Mammary epithelial cell (primary cell): ENCODE measurements at regions of chr17 and their contacts with region 1.

Region 1: GRCh38 chr17:49239963-49240362 is 9.4 kb upstream of the PHOSPHO1 start:
- DNase-seq: no peak
- H3K4me3 ChIP-seq: no peak overlapping the region
- H3K27ac ChIP-seq: no peak overlapping the region
- H3K4me1 ChIP-seq: no peaks in the 10 kb centered on the region
- H3K27me3 ChIP-seq: no peaks in the 10 kb centered on the region
- CTCF ChIP-seq: no peak

Region 2: GRCh38 chr17:49197346-49197998 is 42.5 kb before region 1 on chr17:
- CTCF ChIA-PET with region 1: no interaction called
- dilution Hi-C with region 1: loop called (anchors 5 kb)
- in situ Hi-C with region 1: no loop called
- intact Hi-C with region 1: no loop called
- DNase-seq: peak; percentile 8
- H3K4me3 ChIP-seq: no peak overlapping the region
- H3K27ac ChIP-seq: no peak overlapping the region
- H3K4me1 ChIP-seq: peaks cover 4% of the 10 kb centered on the region
- H3K27me3 ChIP-seq: no peaks in the 10 kb centered on the region
- CTCF ChIP-seq: no peak

Region 3: DNA sequence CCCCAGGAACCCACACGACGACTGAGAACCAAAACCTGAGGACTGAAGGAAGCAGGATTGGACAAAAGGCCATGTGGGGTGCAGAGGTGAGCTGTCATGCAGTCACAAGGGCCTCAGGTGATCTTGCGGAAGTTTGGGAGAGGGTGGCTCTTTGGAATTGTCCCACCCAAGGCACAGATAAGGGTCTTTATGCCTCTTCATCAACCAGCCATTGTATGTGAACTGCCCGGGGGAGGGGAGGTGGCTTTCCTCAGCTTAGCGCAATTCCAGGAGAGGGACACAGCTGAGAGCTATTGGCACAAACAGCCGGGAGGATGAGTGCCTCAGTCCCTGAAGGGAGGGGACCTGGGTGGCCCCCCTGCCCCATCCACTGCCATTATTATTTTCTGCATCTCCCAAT is 45.8 kb after region 1 on chr17:
- CTCF ChIA-PET with region 1: no interaction called
- dilution Hi-C with region 1: loop called (anchors 5 kb)
- in situ Hi-C with region 1: no loop called
- intact Hi-C with region 1: no loop called
- DNase-seq: no peak
- H3K4me3 ChIP-seq: no peak overlapping the region
- H3K27ac ChIP-seq: no peak overlapping the region
- H3K4me1 ChIP-seq: no peaks in the 10 kb centered on the region
- H3K27me3 ChIP-seq: no peaks in the 10 kb centered on the region
- CTCF ChIP-seq: no peak

Region 4: DNA sequence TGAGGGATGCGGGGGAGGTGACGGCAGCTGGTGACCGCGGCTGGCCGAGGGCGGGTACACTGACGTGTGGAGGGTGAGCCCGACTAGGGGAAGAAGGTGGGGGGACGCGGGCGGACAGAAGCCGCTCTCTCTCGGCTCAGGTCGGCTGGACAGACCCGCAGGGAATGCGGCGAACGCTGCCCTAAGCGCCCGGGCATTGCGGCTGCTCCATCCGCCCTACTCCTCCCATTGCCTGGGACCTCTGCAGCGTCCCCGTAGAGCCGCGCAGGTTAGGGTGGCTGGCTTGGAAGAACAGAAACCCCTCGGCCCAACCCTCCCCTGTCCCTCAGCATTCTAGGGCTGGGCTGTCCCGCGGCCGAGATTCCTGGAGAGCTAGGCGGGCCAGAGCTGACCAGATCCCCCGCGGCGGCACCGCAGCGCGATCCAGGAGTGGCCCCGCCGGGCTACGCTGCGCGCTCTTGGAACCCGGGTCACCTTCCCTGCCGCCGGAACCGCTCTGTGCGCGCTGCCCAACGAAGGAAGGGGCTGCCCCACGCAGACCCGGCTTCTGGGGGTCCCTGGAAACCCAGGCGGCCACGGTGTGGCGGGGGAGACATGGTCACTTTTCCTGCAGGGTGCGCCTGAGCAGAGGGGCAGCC is 732.0 kb after region 1 on chr17:
- CTCF ChIA-PET with region 1: no interaction called
- dilution Hi-C with region 1: no loop called
- in situ Hi-C with region 1: no loop called
- intact Hi-C with region 1: no loop called
- DNase-seq: no peak
- H3K4me3 ChIP-seq: peak overlapping the region in 1 of 3 experiments; percentile 33
- H3K27ac ChIP-seq: no peak overlapping the region
- H3K4me1 ChIP-seq: peaks cover 29% of the 10 kb centered on the region
- H3K27me3 ChIP-seq: peaks cover 37% of the 10 kb centered on the region
- CTCF ChIP-seq: no peak